ENCODE measurements at regions of chr18 and their contacts with region 1.

Region 1: GRCh38 chr18:49784427-49785185 is 28.7 kb downstream of the ACAA2 start:
- DNase-seq: no peak
- H3K4me3 ChIP-seq: no peak overlapping the region
- H3K27ac ChIP-seq: no peak overlapping the region
- H3K4me1 ChIP-seq: no peaks in the 10 kb centered on the region
- H3K27me3 ChIP-seq: no peaks in the 10 kb centered on the region
- CTCF ChIP-seq: peak in 1 of 2 donors; percentile 28

Region 2: GRCh38 chr18:49510393-49511115 is 274.1 kb before region 1 on chr18:
- CTCF ChIA-PET with region 1: no interaction called
- dilution Hi-C with region 1: no loop called
- in situ Hi-C with region 1: no loop called
- intact Hi-C with region 1: loop called (anchors 5 kb)
- DNase-seq: peak; percentile 46
- H3K4me3 ChIP-seq: no peak overlapping the region
- H3K27ac ChIP-seq: no peak overlapping the region
- H3K4me1 ChIP-seq: no peaks in the 10 kb centered on the region
- H3K27me3 ChIP-seq: no peaks in the 10 kb centered on the region
- CTCF ChIP-seq: peak; percentile 92 to 93

Region 3: DNA sequence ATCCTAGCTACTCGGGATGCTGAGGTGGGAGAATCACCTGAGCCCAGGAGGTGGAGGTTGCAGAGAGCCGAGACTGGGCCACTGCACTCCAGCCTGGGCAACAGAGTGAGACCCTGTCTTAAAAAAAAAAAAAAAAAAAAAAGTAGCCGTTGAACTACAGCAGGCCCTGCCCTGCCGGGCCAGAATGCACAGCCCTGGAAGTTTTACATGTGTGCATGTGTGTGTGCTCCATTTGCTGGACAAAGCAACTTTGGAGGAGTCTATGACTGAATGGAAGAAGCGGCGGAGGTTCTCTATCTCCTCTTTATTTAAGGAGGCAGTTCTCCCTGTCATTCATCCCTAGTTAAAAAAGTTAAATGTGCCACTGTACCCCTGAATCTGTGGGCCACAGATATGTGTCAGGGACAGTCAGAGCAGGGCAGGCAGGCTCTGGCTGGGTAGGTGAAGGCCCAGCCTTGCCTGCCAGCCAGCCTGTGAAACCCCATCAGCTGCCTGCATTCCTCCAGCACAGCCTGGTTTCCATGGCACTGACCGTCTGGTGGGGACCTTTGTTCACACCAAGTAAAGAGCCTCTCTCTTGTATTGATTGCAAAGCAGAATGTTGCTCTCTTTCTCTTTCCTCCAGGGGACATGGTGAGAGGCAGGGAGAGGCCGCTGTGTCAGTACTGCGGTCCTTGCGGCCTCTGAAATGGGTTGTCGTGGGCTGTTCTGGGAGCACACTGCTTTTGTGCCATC is 211.8 kb before region 1 on chr18:
- CTCF ChIA-PET with region 1: no interaction called
- dilution Hi-C with region 1: no loop called
- in situ Hi-C with region 1: no loop called
- intact Hi-C with region 1: no loop called
- DNase-seq: peak; percentile 9
- H3K4me3 ChIP-seq: no peak overlapping the region
- H3K27ac ChIP-seq: no peak overlapping the region
- H3K4me1 ChIP-seq: peaks cover 6% of the 10 kb centered on the region
- H3K27me3 ChIP-seq: no peaks in the 10 kb centered on the region
- CTCF ChIP-seq: no peak

Region 4: GRCh38 chr18:49645841-49646351 is 138.7 kb before region 1 on chr18:
- CTCF ChIA-PET with region 1: no interaction called
- dilution Hi-C with region 1: no loop called
- in situ Hi-C with region 1: no loop called
- intact Hi-C with region 1: no loop called
- DNase-seq: peak; percentile 42
- H3K4me3 ChIP-seq: peak overlapping the region in 2 of 3 experiments; percentile 1 to 32
- H3K27ac ChIP-seq: no peak overlapping the region
- H3K4me1 ChIP-seq: peaks cover 5% of the 10 kb centered on the region
- H3K27me3 ChIP-seq: no peaks in the 10 kb centered on the region
- CTCF ChIP-seq: no peak

Region 5: DNA sequence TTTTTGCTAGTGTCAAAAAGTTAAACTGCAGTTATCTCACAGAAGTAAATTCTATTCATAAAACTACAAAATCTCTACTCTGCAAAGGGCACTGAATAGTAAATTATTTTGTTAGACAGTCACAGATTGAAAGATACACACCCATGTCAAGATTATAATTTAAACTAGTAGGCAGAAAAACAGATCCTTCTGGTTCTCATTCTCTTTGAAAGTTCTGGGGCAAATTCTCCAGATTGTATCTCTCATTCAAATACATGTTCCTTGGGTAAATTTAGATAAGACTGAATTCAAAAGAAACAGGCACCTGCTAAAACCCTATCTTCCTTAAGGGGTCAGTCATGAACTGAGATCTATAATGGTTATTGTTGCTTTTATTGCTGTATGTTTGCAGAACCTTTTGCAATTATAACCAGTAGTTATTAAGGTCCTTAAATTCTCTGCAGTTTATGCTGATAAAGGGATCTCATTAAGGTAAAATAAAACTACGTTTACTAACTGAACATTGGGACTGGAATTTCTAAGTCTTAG is 326.7 kb after region 1 on chr18:
- CTCF ChIA-PET with region 1: no interaction called
- dilution Hi-C with region 1: no loop called
- in situ Hi-C with region 1: no loop called
- intact Hi-C with region 1: no loop called
- DNase-seq: no peak
- H3K4me3 ChIP-seq: no peak overlapping the region
- H3K27ac ChIP-seq: no peak overlapping the region
- H3K4me1 ChIP-seq: no peaks in the 10 kb centered on the region
- H3K27me3 ChIP-seq: no peaks in the 10 kb centered on the region
- CTCF ChIP-seq: peak; percentile 30 to 50

Region 6: GRCh38 chr18:50143295-50143694 is 358.7 kb after region 1 on chr18:
- CTCF ChIA-PET with region 1: no interaction called
- dilution Hi-C with region 1: no loop called
- in situ Hi-C with region 1: no loop called
- intact Hi-C with region 1: no loop called
- DNase-seq: no peak
- H3K4me3 ChIP-seq: no peak overlapping the region
- H3K27ac ChIP-seq: peak overlapping the region; percentile 19
- H3K4me1 ChIP-seq: peaks cover 32% of the 10 kb centered on the region
- H3K27me3 ChIP-seq: no peaks in the 10 kb centered on the region
- CTCF ChIP-seq: peak; percentile 12 to 18

Measured in mammary epithelial cell (primary cell).